ENCODE measurements at regions of chr17 and their contacts with region 1.

Region 1: DNA sequence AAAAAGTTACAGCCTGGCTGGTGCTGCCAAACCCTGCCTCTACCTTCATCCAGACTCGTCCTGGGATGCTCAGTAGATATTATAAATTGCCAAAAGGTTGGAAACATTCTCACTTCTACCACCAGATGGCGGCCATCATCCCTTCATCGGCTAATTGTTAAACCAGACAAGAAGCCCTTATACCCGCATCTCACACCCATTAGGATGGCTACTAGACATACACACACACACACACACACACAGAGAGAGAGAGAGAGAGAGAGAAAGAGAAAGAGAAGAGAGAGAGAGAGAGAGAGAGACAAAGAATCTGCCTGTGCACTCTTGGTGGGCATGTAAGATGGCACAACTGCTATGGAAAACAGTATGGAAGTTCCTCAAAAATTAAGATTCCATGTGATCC is 15.0 kb upstream of the SCIMP start:
- DNase-seq: peak; percentile 41
- H3K4me3 ChIP-seq: no peak overlapping the region
- CTCF ChIP-seq: peak; percentile 67

Region 2: DNA sequence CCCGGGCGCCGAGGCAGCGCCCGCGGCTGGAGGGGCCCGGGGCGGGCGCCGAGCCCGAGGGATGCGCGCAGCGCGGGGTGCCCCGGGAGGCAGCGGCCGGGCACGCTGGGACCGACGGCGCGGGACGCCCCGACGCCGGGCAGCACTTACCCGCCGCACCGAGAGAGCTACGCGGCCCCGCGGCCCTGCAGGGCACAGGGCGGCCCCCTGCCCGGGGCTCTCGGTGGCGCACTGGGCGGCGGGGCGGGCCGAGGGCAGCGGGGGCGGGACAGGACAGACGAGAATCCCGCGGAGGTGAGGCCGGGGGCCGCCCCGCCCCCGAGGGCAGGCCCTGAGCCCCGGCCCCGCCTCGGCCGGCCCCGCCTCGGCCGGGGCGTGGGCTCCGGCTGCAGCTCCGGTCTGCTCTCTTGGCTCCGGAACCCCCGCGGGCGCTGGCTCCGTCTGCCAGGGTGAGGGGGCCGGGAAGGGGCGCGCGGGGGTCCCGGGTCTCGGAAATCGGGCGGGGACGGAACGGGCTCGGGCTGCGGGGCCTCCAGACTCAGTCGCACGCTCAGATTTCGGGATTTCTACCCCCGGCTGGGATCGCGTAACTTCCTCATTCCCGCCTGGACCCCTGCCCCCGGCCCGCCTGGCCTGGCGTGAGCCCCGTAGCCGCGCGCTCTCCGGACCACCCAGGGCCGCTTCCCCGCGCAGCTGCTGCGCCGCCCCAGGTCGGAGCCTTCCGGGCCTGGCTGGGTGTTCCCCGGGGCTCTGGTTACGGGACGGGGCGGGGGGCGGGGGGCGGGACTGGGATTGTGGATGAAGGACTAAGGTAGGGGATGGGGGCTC is 442.6 kb before region 1 on chr17 and contains the start of gene PLD2:
- CTCF ChIA-PET with region 1: no interaction called
- POLR2A ChIA-PET with region 1: no interaction called
- DNase-seq: no peak
- H3K4me3 ChIP-seq: peak within 1 kb of the TSS; percentile 72
- CTCF ChIP-seq: no peak

Region 3: GRCh38 chr17:5080591-5080990 is 169.0 kb before region 1 on chr17:
- CTCF ChIA-PET with region 1: no interaction called
- POLR2A ChIA-PET with region 1: no interaction called
- DNase-seq: no peak
- H3K4me3 ChIP-seq: no peak overlapping the region
- CTCF ChIP-seq: no peak

Region 4: DNA sequence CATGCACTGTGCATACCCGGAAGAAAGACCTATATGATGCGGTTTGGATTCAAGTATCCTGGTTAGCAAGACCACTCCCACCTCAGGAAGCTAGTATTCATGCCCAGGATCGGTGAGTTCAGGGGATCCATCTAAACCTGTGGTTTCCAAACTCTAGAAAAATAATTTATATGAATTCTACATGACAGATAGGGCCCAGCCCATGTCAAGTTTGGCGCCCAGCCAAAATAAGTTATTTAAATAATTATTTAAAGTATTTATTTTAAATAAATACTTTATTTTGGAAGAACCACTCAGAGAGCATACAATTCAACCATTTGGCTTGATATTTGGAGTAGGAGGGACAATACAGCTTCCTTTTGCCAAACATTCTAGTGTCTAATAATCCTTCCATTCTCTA is 94.1 kb before region 1 on chr17:
- CTCF ChIA-PET with region 1: no interaction called
- POLR2A ChIA-PET with region 1: no interaction called
- DNase-seq: no peak
- H3K4me3 ChIP-seq: no peak overlapping the region
- CTCF ChIP-seq: no peak

Region 5: DNA sequence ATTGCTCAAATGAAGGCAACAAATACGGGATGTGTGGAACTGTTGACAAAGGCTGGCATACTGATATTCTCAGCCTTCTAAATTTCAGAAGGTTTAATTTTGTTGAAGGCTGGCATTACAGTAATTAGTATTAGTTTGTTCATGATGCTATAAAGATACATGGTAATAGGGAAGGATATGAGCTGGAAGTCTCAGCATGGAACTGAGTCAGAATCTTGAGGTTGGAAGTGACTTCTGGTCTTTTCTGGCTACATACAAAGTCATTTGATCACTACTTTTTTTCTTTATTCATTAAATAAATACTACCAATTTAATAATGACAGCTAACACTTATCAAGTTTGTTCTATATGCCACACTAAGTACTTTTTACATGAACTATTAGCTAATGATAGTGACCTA is 55.0 kb after region 1 on chr17:
- CTCF ChIA-PET with region 1: interaction called, 12 read pairs
- POLR2A ChIA-PET with region 1: no interaction called
- DNase-seq: no peak
- H3K4me3 ChIP-seq: no peak overlapping the region
- CTCF ChIP-seq: no peak

Region 6: DNA sequence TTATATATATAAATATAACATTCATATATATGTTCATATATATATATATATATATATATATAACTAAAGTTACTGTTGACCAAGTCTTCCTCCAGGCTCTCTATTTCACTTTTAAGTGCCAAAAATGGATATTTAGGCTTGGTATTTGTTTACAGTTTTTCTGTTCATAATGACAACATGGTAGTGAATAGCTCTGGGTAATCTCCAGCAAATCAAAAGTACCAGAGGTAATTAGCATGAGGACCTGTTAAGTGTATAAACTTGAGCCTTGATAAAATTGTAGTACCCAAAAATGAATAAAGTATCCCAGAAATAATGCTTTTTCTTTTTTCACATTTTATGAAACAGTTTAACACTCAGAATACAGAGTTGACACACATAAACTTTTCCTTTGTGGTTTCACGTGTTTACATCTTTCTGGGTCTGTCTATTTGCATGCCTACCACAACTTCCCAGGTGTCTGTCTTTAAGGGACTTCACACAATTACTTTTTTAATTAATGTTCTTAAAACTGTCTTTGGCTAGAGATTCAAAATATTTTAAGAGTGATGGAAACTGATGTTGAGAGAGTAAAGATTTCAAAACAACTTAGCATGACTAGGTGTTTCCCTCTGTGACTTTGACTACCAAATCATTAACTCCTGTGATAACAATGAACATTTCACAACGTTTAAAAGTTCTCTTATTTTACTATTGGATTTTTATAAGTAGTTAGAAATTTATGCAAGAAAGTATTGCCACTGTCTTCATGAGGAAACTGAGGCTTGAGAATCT is 80.4 kb after region 1 on chr17:
- CTCF ChIA-PET with region 1: no interaction called
- POLR2A ChIA-PET with region 1: no interaction called
- DNase-seq: no peak
- H3K4me3 ChIP-seq: no peak overlapping the region
- CTCF ChIP-seq: no peak

Measured in AG04449 (cell line).